Activated T-helper 1 cell treated with anti-CD3 and anti-CD28 coated beads, Interleukin-12 subunit alpha, Interleukin-12 subunit beta, Interleukin-2, Interleukin-4 antibody, amounts not matched to agents 30 ng/mL and 10 ng/mL and 1 ng/mL, durations not matched to agents 14 hours and 24 hours and 36 hours (primary cell): ENCODE measurements at regions of chr13 and their contacts with region 1.

Region 1: GRCh38 chr13:72727417-72728289 is at the starts of genes BORA and MZT1:
- DNase-seq: peak; percentile 97
- H3K4me3 Mint-ChIP-seq: peak within 1 kb of the TSS; percentile 99
- H3K27ac Mint-ChIP-seq: peak within 1 kb of the TSS; percentile 97
- H3K4me1 Mint-ChIP-seq: peaks cover 70% of the 10 kb centered on the region
- H3K27me3 Mint-ChIP-seq: no peaks in the 10 kb centered on the region
- total RNA-seq, gene BORA: 14.6 and 19.4 TPM in 2 replicates
- total RNA-seq, gene MZT1: 21.2 and 22.8 TPM in 2 replicates

Region 2: GRCh38 chr13:71290963-71291841 is 1436.5 kb before region 1 on chr13:
- intact Hi-C with region 1: loop called (anchors 5 kb)
- DNase-seq: peak; percentile 39
- H3K4me3 Mint-ChIP-seq: peak overlapping the region; percentile 80
- H3K27ac Mint-ChIP-seq: peak overlapping the region; percentile 82
- H3K4me1 Mint-ChIP-seq: peaks cover 14% of the 10 kb centered on the region
- H3K27me3 Mint-ChIP-seq: peaks cover 13% of the 10 kb centered on the region

Region 3: DNA sequence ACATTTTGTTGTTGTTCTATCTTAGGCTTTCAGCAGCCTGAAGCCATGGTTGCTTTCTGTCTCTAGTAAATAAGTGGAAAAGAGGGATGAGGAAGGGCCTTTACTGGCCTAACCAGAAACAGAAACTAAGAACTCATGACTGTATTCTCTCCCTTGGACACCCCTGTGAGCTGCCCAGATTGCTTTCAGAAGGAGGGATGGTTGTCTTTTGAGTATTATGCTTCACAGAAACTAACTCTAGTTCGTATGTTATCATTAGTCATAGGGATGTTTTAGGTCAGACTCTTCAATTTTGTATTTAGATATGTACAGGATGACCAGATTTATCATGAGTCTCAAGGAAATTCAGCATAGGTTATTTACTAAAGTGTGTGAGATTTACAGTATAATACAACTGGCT is 17.6 kb after region 1 on chr13:
- intact Hi-C with region 1: loop called (anchors 2 kb)
- DNase-seq: no peak
- H3K4me3 Mint-ChIP-seq: no peak overlapping the region
- H3K27ac Mint-ChIP-seq: no peak overlapping the region
- H3K4me1 Mint-ChIP-seq: peaks cover 28% of the 10 kb centered on the region
- H3K27me3 Mint-ChIP-seq: no peaks in the 10 kb centered on the region

Region 4: DNA sequence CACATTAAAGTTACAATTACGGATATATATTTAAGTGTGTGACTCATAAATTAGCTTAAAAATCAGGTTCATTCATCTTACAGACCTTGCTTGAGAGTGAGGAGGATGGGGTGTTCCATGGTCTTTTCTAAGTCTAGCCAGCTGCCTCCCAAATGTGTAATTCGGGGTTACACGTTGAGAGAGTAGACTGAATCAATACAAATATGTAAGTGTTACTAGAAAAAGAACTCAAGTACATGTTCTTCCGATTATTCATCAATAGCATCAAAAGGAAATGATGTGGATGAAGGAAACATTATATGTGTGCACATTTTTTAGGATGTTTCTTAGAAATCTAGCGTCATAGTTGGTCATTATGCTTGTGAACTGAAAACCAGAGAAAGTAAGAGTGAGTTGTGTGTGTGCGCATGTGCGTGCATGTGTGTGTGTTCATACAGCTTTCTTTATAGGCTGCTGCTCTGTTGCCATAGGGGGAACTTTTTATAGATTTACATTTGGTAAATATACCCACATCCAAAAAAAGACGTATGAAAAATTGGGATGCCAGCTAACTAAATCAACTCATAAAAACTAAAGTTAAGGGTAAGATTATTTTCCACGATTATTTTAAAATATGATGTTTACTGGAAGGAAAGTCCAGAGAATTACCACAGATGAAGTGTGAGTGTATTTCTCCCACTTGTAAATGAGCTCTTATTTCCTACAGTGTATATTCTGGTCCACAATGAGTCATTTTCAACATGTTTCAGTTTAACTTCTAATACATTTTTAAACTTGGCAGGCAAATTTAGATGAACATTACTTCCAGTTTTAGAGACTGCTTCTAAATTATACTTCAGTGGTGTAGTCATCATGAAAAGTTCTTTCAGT is 136.7 kb after region 1 on chr13:
- intact Hi-C with region 1: loop called (anchors 1 kb)
- DNase-seq: no peak
- H3K4me3 Mint-ChIP-seq: no peak overlapping the region
- H3K27ac Mint-ChIP-seq: peak overlapping the region; percentile 82
- H3K4me1 Mint-ChIP-seq: peaks cover 12% of the 10 kb centered on the region
- H3K27me3 Mint-ChIP-seq: no peaks in the 10 kb centered on the region

Region 5: GRCh38 chr13:73228546-73228945 is 500.9 kb after region 1 on chr13:
- intact Hi-C with region 1: loop called (anchors 10 kb)
- DNase-seq: peak; percentile 8
- H3K4me3 Mint-ChIP-seq: no peak overlapping the region
- H3K27ac Mint-ChIP-seq: peak overlapping the region; percentile 1
- H3K4me1 Mint-ChIP-seq: peaks cover 30% of the 10 kb centered on the region
- H3K27me3 Mint-ChIP-seq: peaks cover 2% of the 10 kb centered on the region